ENCODE measurements at regions of chr20 and their contacts with region 1.

Region 1: DNA sequence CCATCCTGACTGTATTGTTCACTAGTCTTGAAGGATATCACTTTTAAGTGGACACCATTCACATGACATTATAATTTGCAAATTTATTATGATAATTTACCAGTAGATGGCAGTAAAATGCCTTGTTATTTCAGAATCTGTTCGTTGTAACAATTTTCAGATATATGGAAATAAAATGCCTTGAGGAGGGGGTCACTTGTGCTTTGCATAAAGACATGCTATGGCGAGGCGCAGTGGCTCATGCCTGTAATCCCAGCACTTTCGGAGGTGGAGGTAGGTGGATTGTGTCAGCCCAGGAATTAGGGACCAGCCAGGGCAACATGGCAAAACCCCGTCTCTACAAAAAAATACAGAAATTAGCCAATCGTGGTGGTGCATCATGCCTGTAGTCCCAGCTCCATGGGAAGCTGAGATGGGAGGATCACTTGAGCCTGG is 9.0 kb upstream of the NCOA6 start:
- DNase-seq: peak; percentile 28 to 43 (median 40)
- ATAC-seq: peak; percentile 71
- H3K4me3 ChIP-seq: no peak overlapping the region
- H3K27ac ChIP-seq: no peak overlapping the region
- H3K4me1 ChIP-seq: peaks cover 0 to 9% of the 10 kb centered on the region in 2 experiments; a peak in 3 of 5 replicates
- H3K27me3 ChIP-seq: no peaks in the 10 kb centered on the region
- CTCF ChIP-seq: peak in 2 of 3 experiments; percentile 48 to 57; a peak in 3 of 6 replicates
- EP300 ChIP-seq: no peak
- POLR2A ChIP-seq: no peak
- RAD21 ChIP-seq: peak; percentile 41 to 62

Region 2: GRCh38 chr20:34479627-34480026 is 354.8 kb before region 1 on chr20:
- CTCF ChIA-PET with region 1: no interaction called
- POLR2A ChIA-PET with region 1: no interaction called
- in situ Hi-C with region 1: no loop called
- intact Hi-C with region 1: no loop called
- DNase-seq: no peak
- ATAC-seq: no peak
- H3K4me3 ChIP-seq: no peak overlapping the region
- H3K27ac ChIP-seq: no peak overlapping the region
- H3K4me1 ChIP-seq: no peaks in the 10 kb centered on the region
- H3K27me3 ChIP-seq: no peaks in the 10 kb centered on the region
- CTCF ChIP-seq: no peak
- EP300 ChIP-seq: no peak
- POLR2A ChIP-seq: no peak
- RAD21 ChIP-seq: no peak

Region 3: DNA sequence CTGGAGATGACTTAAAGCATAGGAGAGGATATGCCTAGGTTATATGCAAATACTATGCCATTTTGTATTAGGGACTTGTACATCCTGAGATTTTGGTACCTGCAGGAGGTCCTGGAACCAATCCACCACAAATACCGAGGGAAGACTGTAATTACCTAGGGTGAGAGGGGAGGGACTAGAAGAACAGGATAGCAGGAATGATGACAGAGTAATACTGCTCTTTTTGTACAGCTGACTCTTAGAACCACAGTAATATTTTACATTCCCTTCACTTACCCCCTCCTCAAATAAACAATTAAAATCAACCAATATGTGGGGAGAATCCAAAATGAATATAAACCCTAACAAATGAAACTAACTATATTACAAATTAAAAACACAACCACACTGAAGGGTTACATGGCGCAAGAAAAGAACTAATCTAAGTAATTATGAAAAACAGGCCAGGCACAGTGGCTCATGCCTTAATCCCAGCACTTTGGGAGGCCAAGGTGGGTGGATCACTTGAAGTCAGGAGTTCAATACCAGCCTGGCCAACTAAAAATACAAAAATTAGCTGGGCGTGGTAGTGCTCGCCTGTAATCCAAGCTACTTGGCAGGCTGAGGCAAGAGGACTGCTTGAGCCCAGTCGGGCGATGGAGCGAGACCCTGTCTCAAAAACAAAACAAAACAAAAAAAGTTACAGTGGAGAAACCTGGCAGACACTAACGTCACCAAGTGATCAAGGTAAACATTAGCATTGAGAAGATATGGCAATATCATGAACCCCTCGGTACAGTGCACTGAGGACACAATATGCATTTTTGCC is 238.9 kb before region 1 on chr20:
- CTCF ChIA-PET with region 1: no interaction called
- POLR2A ChIA-PET with region 1: no interaction called
- in situ Hi-C with region 1: no loop called
- intact Hi-C with region 1: no loop called
- DNase-seq: no peak
- ATAC-seq: no peak
- H3K4me3 ChIP-seq: no peak overlapping the region
- H3K27ac ChIP-seq: no peak overlapping the region
- H3K4me1 ChIP-seq: no peaks in the 10 kb centered on the region
- H3K27me3 ChIP-seq: no peaks in the 10 kb centered on the region
- CTCF ChIP-seq: no peak
- EP300 ChIP-seq: no peak
- POLR2A ChIP-seq: no peak
- RAD21 ChIP-seq: no peak

Region 4: GRCh38 chr20:34639755-34640222 is 194.7 kb before region 1 on chr20:
- CTCF ChIA-PET with region 1: no interaction called
- POLR2A ChIA-PET with region 1: no interaction called
- in situ Hi-C with region 1: no loop called
- intact Hi-C with region 1: no loop called
- DNase-seq: no peak
- ATAC-seq: no peak
- H3K4me3 ChIP-seq: no peak overlapping the region
- H3K27ac ChIP-seq: no peak overlapping the region
- H3K4me1 ChIP-seq: no peaks in the 10 kb centered on the region
- H3K27me3 ChIP-seq: no peaks in the 10 kb centered on the region
- CTCF ChIP-seq: no peak
- EP300 ChIP-seq: no peak
- POLR2A ChIP-seq: no peak
- RAD21 ChIP-seq: no peak

Region 5: GRCh38 chr20:34815636-34816035 is 18.8 kb before region 1 on chr20:
- CTCF ChIA-PET with region 1: no interaction called
- POLR2A ChIA-PET with region 1: no interaction called
- in situ Hi-C with region 1: no loop called
- intact Hi-C with region 1: no loop called
- DNase-seq: no peak
- ATAC-seq: no peak
- H3K4me3 ChIP-seq: no peak overlapping the region
- H3K27ac ChIP-seq: no peak overlapping the region
- H3K4me1 ChIP-seq: no peaks in the 10 kb centered on the region; a peak in 3 of 5 replicates
- H3K27me3 ChIP-seq: no peaks in the 10 kb centered on the region
- CTCF ChIP-seq: no peak
- EP300 ChIP-seq: no peak
- POLR2A ChIP-seq: no peak
- RAD21 ChIP-seq: no peak

Region 6: GRCh38 chr20:34955232-34956040 is 121.0 kb after region 1 on chr20 and contains the starts of genes GSS and MYH7B:
- CTCF ChIA-PET with region 1: no interaction called
- POLR2A ChIA-PET with region 1: interaction called, 4 read pairs
- in situ Hi-C with region 1: no loop called
- intact Hi-C with region 1: loop called (anchors 1 kb)
- DNase-seq: peak; percentile 97 to 99 (median 98)
- ATAC-seq: peak; percentile 95
- H3K4me3 ChIP-seq: peak within 1 kb of the TSS; percentile 55
- H3K27ac ChIP-seq: peak within 1 kb of the TSS; percentile 89
- H3K4me1 ChIP-seq: peaks cover 16 to 22% of the 10 kb centered on the region in 2 experiments; a peak in 4 of 5 replicates
- H3K27me3 ChIP-seq: no peaks in the 10 kb centered on the region
- CTCF ChIP-seq: peak; percentile 61 to 73 (median 68); a peak in 5 of 6 replicates
- EP300 ChIP-seq: no peak
- POLR2A ChIP-seq: peak; percentile 97
- RAD21 ChIP-seq: peak; percentile 65 to 75
- polyA plus RNA-seq, gene GSS: 18.4 to 40.4 TPM
- polyA plus RNA-seq, gene MYH7B: not detected

Region 7: GRCh38 chr20:35207950-35208611 is 373.6 kb after region 1 on chr20:
- CTCF ChIA-PET with region 1: interaction called, 4 read pairs
- POLR2A ChIA-PET with region 1: no interaction called
- in situ Hi-C with region 1: loop called (anchors 10 kb)
- intact Hi-C with region 1: loop called (anchors 5 kb)
- DNase-seq: peak; percentile 59 to 90 (median 64)
- ATAC-seq: peak; percentile 98
- H3K4me3 ChIP-seq: no peak overlapping the region
- H3K27ac ChIP-seq: no peak overlapping the region
- H3K4me1 ChIP-seq: peaks cover 0 to 6% of the 10 kb centered on the region in 2 experiments; a peak in 2 of 5 replicates
- H3K27me3 ChIP-seq: no peaks in the 10 kb centered on the region
- CTCF ChIP-seq: peak; percentile 78 to 95 (median 79)
- EP300 ChIP-seq: peak; percentile 55
- POLR2A ChIP-seq: no peak
- RAD21 ChIP-seq: peak; percentile 98 to 99

Region 8: DNA sequence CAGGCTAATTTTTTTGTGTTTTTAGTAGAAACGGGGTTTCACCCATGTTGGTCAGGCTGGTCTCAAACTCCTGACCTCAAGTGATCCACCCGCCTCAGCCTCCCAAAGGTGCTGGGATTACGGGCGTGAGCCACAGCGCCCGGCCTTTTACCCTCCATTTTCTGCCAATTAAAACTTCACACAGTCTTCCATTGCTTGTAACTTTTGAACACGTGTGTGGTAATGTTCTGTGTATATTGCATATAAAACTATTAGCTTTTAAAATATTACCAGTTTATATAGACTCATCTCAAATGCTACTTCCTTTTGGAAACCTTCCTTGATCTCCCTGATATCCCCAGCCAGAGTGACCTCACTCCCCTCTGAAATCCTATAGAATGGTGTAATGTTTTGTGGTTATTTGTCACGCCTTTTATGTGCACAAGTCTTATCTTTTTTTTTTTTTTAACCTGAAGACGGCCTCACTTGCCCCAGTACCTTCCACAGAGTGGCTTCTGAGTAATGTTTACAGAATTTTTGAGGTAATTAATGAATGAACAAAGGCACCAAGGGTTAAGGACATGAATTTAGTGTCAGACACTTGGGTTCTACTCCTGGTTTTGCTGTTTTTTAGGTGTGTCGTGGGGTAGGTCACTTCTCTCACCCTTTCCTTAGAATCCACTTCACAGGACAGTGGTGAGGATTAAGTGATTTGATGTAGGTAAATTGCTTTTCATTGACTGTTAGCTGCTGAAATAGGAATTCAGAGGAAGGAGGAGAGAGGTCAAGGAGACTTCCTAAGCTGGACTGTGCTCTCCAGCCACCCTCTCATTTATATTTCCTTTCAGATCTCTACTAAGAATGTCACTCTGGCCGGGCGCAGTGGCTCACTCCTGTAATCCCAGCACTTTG is 380.8 kb after region 1 on chr20:
- CTCF ChIA-PET with region 1: no interaction called
- POLR2A ChIA-PET with region 1: no interaction called
- in situ Hi-C with region 1: loop called (anchors 10 kb)
- intact Hi-C with region 1: no loop called
- DNase-seq: peak in 2 of 4 experiments; percentile 24 to 27
- ATAC-seq: peak; percentile 74
- H3K4me3 ChIP-seq: no peak overlapping the region
- H3K27ac ChIP-seq: no peak overlapping the region
- H3K4me1 ChIP-seq: peaks cover 3 to 7% of the 10 kb centered on the region in 2 experiments; a peak in 2 of 5 replicates
- H3K27me3 ChIP-seq: peaks cover 4 to 5% of the 10 kb centered on the region in 2 experiments; a peak in 1 of 5 replicates
- CTCF ChIP-seq: no peak
- EP300 ChIP-seq: no peak
- POLR2A ChIP-seq: no peak
- RAD21 ChIP-seq: no peak

Region 9: DNA sequence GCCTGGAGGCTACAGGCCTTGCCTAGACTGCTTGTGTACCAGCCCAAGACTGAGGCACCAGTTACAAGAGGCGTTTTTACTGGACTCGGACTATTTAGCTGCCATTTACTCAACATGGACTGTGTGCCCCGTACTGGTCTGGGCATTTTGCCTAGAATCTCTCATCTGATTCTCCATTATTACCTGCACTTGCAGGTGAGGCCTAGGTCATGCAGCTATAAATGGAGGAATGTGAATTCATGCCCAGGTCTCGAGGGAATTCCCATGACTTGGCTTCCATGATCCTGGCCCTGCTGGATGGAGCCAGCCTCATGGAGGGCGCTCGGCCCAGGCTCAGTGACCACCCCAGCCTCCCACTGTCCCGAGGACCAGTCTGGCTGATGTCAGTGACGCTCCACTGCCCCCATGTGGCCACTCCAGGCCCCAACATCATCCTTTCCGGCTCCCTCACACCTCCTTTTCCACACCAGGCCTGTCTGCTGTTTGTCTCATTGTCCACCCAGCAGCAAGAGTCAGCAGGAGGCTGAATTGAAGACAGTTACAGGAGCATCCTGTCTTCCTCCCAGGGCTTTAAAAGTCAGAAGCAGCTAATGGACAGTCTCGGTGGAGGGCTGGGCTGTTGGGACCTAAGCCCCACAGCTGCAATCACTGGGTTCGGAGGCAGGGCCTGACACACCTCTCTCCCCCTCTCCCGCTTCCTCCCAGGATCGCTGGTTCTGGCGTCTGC is 434.7 kb after region 1 on chr20:
- CTCF ChIA-PET with region 1: no interaction called
- POLR2A ChIA-PET with region 1: no interaction called
- in situ Hi-C with region 1: no loop called
- intact Hi-C with region 1: loop called (anchors 10 kb)
- DNase-seq: peak; percentile 80 to 83 (median 82)
- ATAC-seq: peak; percentile 86
- H3K4me3 ChIP-seq: no peak overlapping the region
- H3K27ac ChIP-seq: no peak overlapping the region
- H3K4me1 ChIP-seq: peaks cover 8 to 33% of the 10 kb centered on the region in 2 experiments; a peak in 4 of 5 replicates
- H3K27me3 ChIP-seq: no peaks in the 10 kb centered on the region
- CTCF ChIP-seq: peak; percentile 85 to 93 (median 90)
- EP300 ChIP-seq: no peak
- POLR2A ChIP-seq: no peak
- RAD21 ChIP-seq: peak; percentile 61 to 83

Measured in K562 (cell line).